ENCODE measurements at regions of chr9 and their contacts with region 1.

Region 1: GRCh38 chr9:6367128-6367890 is 39.1 kb downstream of the TPD52L3 start:
- DNase-seq: no peak
- ATAC-seq: no peak
- H3K4me3 ChIP-seq: no peak overlapping the region
- H3K27ac ChIP-seq: no peak overlapping the region
- H3K4me1 ChIP-seq: no peaks in the 10 kb centered on the region
- CTCF ChIP-seq: no peak
- EP300 ChIP-seq: no peak
- POLR2A ChIP-seq: no peak
- RAD21 ChIP-seq: no peak

Region 2: DNA sequence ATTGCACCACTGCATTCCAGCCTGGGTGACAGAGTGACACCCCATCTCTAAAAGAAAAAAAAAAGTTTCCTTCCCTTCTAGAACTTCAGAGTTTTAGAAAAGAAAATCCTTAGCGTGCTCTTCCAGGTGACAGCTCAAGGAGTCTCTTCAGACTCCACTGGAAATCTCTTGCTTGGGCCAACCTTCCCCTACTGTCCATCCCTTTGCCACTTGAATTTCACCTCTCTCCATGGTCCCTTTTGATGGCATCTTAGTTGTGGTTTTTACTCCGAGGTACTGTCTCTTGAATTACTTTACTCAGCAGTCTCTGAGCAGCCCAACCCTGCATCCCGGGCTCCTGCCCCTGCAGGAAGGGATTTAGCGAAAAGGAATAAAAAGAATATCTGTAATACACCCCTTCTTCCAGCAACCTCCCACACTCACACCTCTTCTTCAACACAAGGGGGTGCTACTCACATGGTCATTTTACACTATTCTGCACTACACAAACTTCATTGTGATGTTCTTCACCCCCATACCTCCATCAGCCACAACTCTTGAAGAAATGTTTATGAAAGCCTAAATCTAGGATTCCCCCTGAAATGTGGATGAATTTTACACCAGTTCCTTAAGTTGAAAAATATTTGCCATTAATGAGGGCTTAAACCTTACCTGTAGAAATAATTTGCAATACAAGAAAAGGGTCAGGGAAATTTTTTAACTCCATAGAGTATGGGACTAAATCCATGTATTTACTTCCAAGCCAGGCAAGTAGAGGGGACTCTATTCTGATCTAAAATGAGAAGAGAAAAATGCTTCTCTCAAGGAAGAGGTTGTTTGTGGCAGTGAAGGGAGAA is 13.2 kb before region 1 on chr9:
- CTCF ChIA-PET with region 1: interaction called, 13 read pairs
- POLR2A ChIA-PET with region 1: no interaction called
- DNase-seq: peak; percentile 69 to 77
- ATAC-seq: peak; percentile 89 to 98
- H3K4me3 ChIP-seq: no peak overlapping the region
- H3K27ac ChIP-seq: no peak overlapping the region
- H3K4me1 ChIP-seq: peaks cover 15% of the 10 kb centered on the region
- CTCF ChIP-seq: peak; percentile 85
- EP300 ChIP-seq: no peak
- POLR2A ChIP-seq: no peak
- RAD21 ChIP-seq: peak; percentile 84 to 85

Region 3: DNA sequence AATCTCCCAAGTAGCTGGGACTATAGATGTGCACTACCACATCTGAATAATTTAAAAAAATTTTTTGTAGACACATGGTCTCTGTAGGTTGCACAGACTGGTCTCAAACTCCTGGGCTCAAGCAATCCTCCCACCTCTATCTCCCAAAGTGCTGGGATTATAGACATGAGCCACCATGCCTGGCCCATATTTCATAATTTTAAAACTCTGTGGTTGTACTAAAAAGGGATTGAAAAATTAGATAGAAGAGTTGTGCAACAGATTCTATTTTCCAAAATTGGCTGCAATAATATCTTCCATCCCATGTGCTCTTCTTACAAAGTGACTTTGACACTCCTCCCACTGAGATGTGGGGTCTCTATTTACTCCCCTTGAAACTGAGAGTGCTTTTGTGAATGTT is 38.1 kb after region 1 on chr9:
- CTCF ChIA-PET with region 1: no interaction called
- POLR2A ChIA-PET with region 1: no interaction called
- DNase-seq: no peak
- ATAC-seq: no peak
- H3K4me3 ChIP-seq: no peak overlapping the region
- H3K27ac ChIP-seq: no peak overlapping the region
- H3K4me1 ChIP-seq: no peaks in the 10 kb centered on the region
- CTCF ChIP-seq: no peak
- EP300 ChIP-seq: no peak
- POLR2A ChIP-seq: no peak
- RAD21 ChIP-seq: no peak